ENCODE measurements at regions of chr7 and their contacts with region 1.

Region 1: DNA sequence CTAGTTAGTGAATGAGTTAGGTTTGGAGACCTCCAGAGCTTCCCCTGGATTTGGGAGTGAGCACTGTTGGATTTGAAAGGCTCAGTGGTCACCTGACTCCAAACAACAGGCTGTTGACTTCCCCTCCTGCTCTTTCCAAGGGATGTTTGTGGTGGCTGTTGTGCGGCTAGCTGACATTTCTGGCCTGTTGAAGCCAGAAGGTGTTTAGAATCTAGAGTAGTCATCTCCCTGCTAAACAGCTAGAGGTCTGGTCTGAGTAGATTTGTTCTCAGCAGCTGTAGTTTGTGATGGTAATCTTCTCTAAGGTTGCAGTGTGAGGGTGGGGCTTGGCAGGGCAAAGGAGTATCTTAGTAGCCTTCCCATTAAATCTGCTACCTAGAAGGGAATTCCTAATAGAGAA is 30.1 kb downstream of the BPGM start:
- DNase-seq: no peak
- ATAC-seq: no peak
- H3K4me3 ChIP-seq: no peak overlapping the region
- H3K27ac ChIP-seq: no peak overlapping the region
- H3K4me1 ChIP-seq: no peaks in the 10 kb centered on the region
- H3K27me3 ChIP-seq: no peaks in the 10 kb centered on the region
- CTCF ChIP-seq: no peak

Region 2: DNA sequence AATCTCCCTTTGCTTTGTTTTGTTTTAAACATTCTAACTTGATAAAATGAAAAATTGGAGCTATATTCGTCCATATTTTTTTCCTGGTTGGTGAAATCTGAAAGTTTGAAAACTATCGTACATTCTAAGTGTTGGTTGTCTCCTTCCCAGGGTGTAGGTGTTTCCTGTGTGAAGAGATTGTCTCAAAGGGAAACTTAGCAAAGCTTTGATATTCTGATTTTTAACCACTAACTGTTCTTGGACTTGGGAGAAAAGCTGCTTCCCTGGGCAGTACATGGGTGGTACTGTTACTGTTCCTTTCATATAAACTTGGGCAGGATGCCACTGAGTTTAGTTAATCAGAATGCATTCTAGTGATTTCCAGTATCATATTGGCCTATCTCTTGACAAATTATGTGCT is 803.1 kb before region 1 on chr7:
- CTCF ChIA-PET with region 1: no interaction called
- POLR2A ChIA-PET with region 1: interaction called, 10 read pairs
- in situ Hi-C with region 1: no loop called
- intact Hi-C with region 1: no loop called
- DNase-seq: no peak
- ATAC-seq: no peak
- H3K4me3 ChIP-seq: no peak overlapping the region
- H3K27ac ChIP-seq: no peak overlapping the region
- H3K4me1 ChIP-seq: no peaks in the 10 kb centered on the region
- H3K27me3 ChIP-seq: no peaks in the 10 kb centered on the region
- CTCF ChIP-seq: no peak

Measured in Panc1 (cell line).